CD8-positive, alpha-beta T cell (primary cell): ENCODE measurements at regions of chr2 and their contacts with region 1.

Region 1: GRCh38 chr2:174465327-174465726 is 21.5 kb downstream of the GPR155 start:
- DNase-seq: no peak
- ATAC-seq: no peak
- H3K4me3 ChIP-seq: no peak overlapping the region
- H3K4me3 Mint-ChIP-seq: no peak overlapping the region
- H3K27ac ChIP-seq: no peak overlapping the region
- H3K27ac Mint-ChIP-seq: no peak overlapping the region
- H3K4me1 ChIP-seq: no peaks in the 10 kb centered on the region
- H3K4me1 Mint-ChIP-seq: peaks cover 1% of the 10 kb centered on the region
- H3K27me3 ChIP-seq: no peaks in the 10 kb centered on the region
- H3K27me3 Mint-ChIP-seq: no peaks in the 10 kb centered on the region
- CTCF ChIP-seq: no peak

Region 2: GRCh38 chr2:174503161-174503809 is 38.0 kb after region 1 on chr2:
- CTCF ChIA-PET with region 1: interaction called, 15 read pairs
- POLR2A ChIA-PET with region 1: no interaction called
- intact Hi-C with region 1: no loop called
- DNase-seq: no peak
- ATAC-seq: no peak
- H3K4me3 ChIP-seq: no peak overlapping the region
- H3K4me3 Mint-ChIP-seq: no peak overlapping the region
- H3K27ac ChIP-seq: no peak overlapping the region
- H3K27ac Mint-ChIP-seq: no peak overlapping the region
- H3K4me1 ChIP-seq: no peaks in the 10 kb centered on the region
- H3K4me1 Mint-ChIP-seq: peaks cover 2% of the 10 kb centered on the region
- H3K27me3 ChIP-seq: no peaks in the 10 kb centered on the region
- H3K27me3 Mint-ChIP-seq: no peaks in the 10 kb centered on the region
- CTCF ChIP-seq: no peak

Region 3: DNA sequence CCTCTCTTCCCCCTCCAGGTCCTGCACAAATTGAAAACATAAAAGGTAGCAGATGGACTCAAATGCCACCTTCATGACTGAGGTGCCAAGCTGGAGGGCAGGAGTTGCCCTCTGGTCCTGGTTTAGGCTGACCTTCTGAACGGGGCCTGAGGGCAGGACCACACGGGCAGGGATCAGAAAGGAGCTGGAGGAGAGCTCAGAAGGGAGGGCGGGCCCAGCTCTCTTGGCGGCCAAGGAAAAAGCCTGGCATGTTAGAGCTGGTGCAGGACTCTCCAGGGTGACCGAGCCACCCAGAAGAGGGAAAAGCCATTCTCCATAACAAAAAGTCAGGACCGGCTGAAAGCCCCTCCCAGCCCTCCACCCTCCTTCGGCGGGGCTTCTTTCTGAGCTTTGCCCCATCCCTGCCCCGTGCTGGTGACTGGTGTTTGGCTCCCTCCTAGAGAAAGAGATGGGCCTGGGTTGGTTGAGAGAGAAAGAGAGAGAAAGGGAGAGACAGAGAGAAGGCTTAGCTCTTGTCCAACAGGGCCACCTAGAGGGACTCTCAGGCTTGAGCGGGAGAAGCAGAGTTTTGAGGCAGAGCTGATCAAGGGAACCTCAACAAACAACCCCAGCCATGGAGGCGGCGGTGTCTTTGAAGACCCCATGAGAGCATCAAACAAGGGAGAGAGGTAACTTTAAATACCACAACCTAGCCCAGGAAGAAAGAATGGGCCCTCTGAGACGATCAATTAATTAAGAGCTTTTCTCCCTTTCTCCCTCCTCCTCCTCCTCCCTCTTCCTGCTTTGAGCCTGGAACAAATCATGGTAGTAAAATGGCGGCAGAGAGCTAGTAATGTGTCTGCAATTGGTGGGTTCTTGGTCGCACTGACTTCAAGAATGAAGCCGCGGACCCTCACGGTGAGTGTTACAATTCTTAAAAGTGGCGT is 81.5 kb after region 1 on chr2:
- CTCF ChIA-PET with region 1: interaction called, 39 read pairs
- POLR2A ChIA-PET with region 1: interaction called, 4 read pairs
- intact Hi-C with region 1: loop called (anchors 1 to 5 kb)
- DNase-seq: peak in 5 of 9 experiments; percentile 8 to 66 (median 46)
- ATAC-seq: peak; percentile 83
- H3K4me3 ChIP-seq: no peak overlapping the region
- H3K4me3 Mint-ChIP-seq: no peak overlapping the region
- H3K27ac ChIP-seq: no peak overlapping the region
- H3K27ac Mint-ChIP-seq: peak overlapping the region; percentile 73
- H3K4me1 ChIP-seq: peaks cover 4% of the 10 kb centered on the region
- H3K4me1 Mint-ChIP-seq: peaks cover 23% of the 10 kb centered on the region
- H3K27me3 ChIP-seq: no peaks in the 10 kb centered on the region
- H3K27me3 Mint-ChIP-seq: no peaks in the 10 kb centered on the region
- CTCF ChIP-seq: no peak

Region 4: GRCh38 chr2:174577967-174578589 is 112.8 kb after region 1 on chr2:
- CTCF ChIA-PET with region 1: interaction called, 22 read pairs
- POLR2A ChIA-PET with region 1: no interaction called
- intact Hi-C with region 1: loop called in 1 of 2 experiments (anchors 5 kb)
- DNase-seq: peak in 6 of 9 experiments; percentile 33 to 87 (median 67)
- ATAC-seq: peak; percentile 84
- H3K4me3 ChIP-seq: no peak overlapping the region
- H3K4me3 Mint-ChIP-seq: no peak overlapping the region
- H3K27ac ChIP-seq: peak overlapping the region in 1 of 2 experiments; percentile 5
- H3K27ac Mint-ChIP-seq: peak overlapping the region; percentile 83
- H3K4me1 ChIP-seq: peaks cover 65% of the 10 kb centered on the region
- H3K4me1 Mint-ChIP-seq: peaks cover 80% of the 10 kb centered on the region
- H3K27me3 ChIP-seq: no peaks in the 10 kb centered on the region
- H3K27me3 Mint-ChIP-seq: no peaks in the 10 kb centered on the region
- CTCF ChIP-seq: peak; percentile 83

Region 5: DNA sequence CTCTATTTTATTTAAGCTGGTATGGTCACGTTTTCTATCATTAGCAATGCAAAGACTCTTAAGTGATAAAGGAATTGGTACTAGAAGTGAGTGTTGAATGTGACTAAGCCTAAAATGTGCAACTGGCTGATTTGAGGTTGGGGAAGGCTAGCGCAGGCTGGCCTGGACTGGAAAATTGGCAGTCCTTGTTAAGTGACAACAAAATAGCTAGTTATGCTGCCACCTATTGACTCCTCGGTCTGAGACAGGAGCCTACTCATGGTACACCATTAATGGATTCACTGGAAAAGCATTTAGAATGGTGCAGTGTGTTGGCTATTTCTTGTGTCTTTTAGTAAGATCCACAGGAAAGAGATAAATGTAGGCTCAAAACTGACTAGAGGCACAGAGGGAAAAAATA is 138.0 kb after region 1 on chr2:
- CTCF ChIA-PET with region 1: interaction called, 27 read pairs
- POLR2A ChIA-PET with region 1: interaction called, 3 read pairs
- intact Hi-C with region 1: loop called (anchors 1 to 2 kb)
- DNase-seq: peak in 6 of 9 experiments; percentile 31 to 86 (median 64)
- ATAC-seq: peak; percentile 67
- H3K4me3 ChIP-seq: no peak overlapping the region
- H3K4me3 Mint-ChIP-seq: no peak overlapping the region
- H3K27ac ChIP-seq: peak overlapping the region in 1 of 2 experiments; percentile 11
- H3K27ac Mint-ChIP-seq: peak overlapping the region; percentile 85
- H3K4me1 ChIP-seq: peaks cover 76% of the 10 kb centered on the region
- H3K4me1 Mint-ChIP-seq: peaks cover 86% of the 10 kb centered on the region
- H3K27me3 ChIP-seq: no peaks in the 10 kb centered on the region
- H3K27me3 Mint-ChIP-seq: no peaks in the 10 kb centered on the region
- CTCF ChIP-seq: peak; percentile 65

Region 6: GRCh38 chr2:175062787-175063585 is 597.7 kb after region 1 on chr2:
- CTCF ChIA-PET with region 1: no interaction called
- POLR2A ChIA-PET with region 1: no interaction called
- intact Hi-C with region 1: no loop called
- DNase-seq: no peak
- ATAC-seq: no peak
- H3K4me3 ChIP-seq: no peak overlapping the region
- H3K4me3 Mint-ChIP-seq: no peak overlapping the region
- H3K27ac ChIP-seq: no peak overlapping the region
- H3K27ac Mint-ChIP-seq: no peak overlapping the region
- H3K4me1 ChIP-seq: no peaks in the 10 kb centered on the region
- H3K4me1 Mint-ChIP-seq: peaks cover 11% of the 10 kb centered on the region
- H3K27me3 ChIP-seq: no peaks in the 10 kb centered on the region
- H3K27me3 Mint-ChIP-seq: no peaks in the 10 kb centered on the region
- CTCF ChIP-seq: no peak